Heart right ventricle (tissue), 16 donors: ENCODE measurements at regions of chr12 and their contacts with region 1.

Region 1: DNA sequence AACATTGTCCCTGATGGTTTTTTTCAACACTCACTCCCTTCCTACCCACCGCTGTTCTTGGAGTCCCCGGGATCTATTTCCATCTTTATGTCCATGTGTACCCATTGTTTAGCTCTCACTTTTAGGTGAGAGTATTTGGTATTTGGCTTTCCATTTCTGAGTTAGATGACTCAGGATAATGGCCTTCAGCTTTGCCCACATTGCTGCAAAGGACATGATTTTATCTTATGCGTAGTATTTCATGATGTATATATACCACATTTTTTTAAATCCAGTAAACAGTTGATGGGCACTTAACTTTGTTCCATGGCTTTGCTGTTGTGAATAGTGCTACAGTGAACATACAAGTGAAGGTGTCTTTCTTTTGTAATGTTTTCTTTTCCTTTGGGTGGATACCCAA is 123.5 kb upstream of the KITLG start:
- DNase-seq: no peak
- ATAC-seq: no peak
- H3K4me3 ChIP-seq: no peak overlapping the region
- H3K27ac ChIP-seq: no peak overlapping the region
- H3K4me1 ChIP-seq: no peaks in the 10 kb centered on the region
- H3K27me3 ChIP-seq: no peaks in the 10 kb centered on the region
- CTCF ChIP-seq: no peak

Region 2: DNA sequence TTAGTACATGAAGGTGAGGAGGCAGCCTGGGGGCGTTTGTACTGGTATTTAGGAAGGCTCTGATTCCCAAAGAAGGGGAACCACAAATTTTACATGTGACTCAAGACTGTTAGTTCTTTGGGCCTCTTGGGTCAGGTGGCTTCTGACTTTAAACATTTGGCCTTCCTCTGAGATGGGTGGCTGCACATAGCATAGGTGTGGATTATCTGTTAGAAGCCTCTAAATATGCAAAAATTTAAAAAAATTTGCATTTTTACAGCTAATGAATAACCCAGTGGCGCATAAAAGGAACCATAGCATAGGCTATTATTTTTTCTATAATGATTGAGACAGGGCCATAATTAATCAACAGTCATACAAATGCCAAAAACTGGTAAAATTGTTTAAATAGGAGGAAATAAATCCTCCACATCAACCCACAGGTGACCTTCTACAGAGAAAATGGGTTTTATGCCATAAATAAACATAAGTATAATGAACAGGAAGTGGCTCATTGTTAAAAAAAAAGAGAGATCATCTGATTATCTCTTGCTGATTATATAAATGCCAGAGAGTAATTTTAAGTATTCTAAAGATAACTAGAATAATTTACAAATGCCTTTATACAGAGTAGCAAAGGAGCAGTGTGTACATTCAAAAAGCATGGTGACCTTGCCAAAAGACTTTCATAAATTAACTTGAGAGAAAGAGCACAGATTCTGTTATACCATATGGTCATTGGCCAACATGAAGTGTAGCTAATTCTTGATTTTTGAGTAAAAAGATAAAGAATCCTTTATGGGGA is 1289.1 kb after region 1 on chr12:
- intact Hi-C with region 1: loop called in 1 of 10 experiments (anchors 5 kb)
- DNase-seq: no peak
- ATAC-seq: no peak
- H3K4me3 ChIP-seq: no peak overlapping the region
- H3K27ac ChIP-seq: no peak overlapping the region
- H3K4me1 ChIP-seq: peaks cover 0 to 16% (median 0%) of the 10 kb centered on the region in 9 donors
- H3K27me3 ChIP-seq: no peaks in the 10 kb centered on the region
- CTCF ChIP-seq: no peak